ENCODE measurements at regions of chr12 and their contacts with region 1.

Region 1: GRCh38 chr12:124567661-124568373 is 405 bp upstream of the NCOR2 start:
- DNase-seq: peak; percentile 90 to 92
- ATAC-seq: peak; percentile 82

Region 2: GRCh38 chr12:123938679-123939480 is 628.9 kb before region 1 on chr12:
- intact Hi-C with region 1: no loop called
- DNase-seq: no peak
- ATAC-seq: no peak

Region 3: GRCh38 chr12:124379938-124380754 is 187.7 kb before region 1 on chr12:
- intact Hi-C with region 1: loop called in 1 of 2 experiments (anchors 10 kb)
- DNase-seq: peak in 1 of 2 donors; percentile 60
- ATAC-seq: no peak

Region 4: DNA sequence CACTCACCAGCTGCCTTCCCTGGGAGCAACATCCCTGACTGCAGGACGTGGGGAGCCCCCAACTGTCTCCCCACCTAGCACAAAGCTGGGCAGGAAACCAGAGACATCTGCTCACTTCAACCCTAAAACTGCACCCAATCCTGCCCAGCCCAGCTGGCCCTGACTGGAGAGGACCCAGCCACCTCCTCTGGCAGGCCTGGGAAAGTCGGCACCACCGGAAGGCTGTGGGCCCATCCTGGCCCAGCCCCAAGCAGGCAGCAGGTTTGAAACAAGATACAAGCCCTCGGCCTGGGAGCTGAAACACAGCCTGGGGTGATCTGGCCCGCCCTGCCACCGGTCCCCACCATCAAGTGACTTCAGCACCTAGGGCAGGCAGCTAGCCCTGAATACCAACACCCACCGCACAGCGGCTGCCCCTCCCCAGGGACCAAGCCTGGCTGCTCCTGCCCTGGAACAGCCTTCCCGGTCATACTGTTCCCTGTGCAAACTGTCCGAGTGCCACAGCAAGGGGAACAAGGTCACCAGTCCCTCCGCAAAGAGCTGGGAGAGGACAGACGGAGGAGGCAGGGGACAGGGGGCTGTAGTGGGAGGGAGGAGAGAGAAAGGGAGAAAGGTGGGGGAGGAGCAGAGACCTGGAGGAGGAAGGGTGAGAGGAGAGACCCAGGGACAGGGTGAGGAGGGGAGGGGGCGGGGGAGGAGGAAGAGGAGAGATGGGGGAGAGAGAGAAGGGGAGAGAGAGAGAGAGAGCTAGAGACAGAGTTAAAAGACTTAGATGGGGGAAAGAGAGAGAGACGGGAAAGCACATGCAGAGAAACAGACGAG is 157.3 kb before region 1 on chr12:
- intact Hi-C with region 1: no loop called
- DNase-seq: no peak
- ATAC-seq: no peak

Region 5: GRCh38 chr12:124518051-124518932 is 49.5 kb before region 1 on chr12:
- intact Hi-C with region 1: loop called in 1 of 2 experiments (anchors 10 kb)
- DNase-seq: peak; percentile 98
- ATAC-seq: peak; percentile 73

Region 6: GRCh38 chr12:124754949-124755800 is 187.4 kb after region 1 on chr12:
- intact Hi-C with region 1: loop called (anchors 5 to 10 kb)
- DNase-seq: peak; percentile 54 to 89
- ATAC-seq: peak; percentile 65

Region 7: DNA sequence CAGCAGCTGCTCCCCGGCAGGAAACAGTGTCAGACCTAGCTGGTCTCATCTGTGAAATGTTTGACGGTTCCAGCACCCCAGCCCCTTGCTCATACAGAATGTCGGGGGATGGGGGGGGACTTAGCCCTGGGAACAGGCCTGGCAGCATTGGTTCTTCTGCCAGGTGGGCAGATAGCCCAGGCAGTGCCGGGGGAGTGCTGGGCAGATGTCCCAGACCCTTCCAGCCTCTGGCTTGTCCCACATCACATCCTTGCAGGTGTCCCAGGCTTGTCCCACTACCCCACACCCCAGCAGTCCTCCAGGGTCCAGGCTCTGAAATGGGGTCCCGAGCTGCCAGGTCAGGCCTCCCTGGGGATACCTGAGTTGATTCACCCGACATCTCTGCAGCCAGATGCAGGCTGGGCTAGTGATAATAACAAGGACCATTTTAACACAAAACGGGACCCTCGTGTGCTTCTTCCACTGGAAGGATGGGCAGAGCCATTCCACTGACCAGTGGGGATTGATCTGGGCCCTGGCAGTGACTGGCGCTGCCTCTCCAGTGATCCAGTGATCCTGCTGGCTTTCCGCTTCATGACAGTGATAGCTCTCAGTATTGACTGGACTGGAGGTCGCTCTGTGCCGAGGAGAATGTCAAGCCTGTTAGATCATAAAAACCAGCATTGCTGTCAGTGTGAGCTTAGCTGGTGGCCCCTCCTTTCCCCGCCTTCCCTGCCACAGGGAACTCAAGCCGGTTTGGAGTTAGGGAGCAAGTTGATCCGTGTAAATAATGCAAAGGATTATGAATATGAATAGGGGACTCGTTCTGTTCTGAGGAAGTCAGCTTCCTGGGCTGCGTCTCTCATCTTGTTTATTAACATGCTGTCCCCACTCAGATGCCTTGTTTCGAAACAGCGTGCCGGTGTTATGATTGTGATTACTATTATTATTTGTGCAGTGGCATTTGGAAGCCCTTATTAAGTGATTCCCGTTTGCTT is 678.1 kb after region 1 on chr12:
- intact Hi-C with region 1: no loop called
- DNase-seq: no peak
- ATAC-seq: no peak